Mucosa of descending colon (tissue), 3 donors: ENCODE measurements at regions of chr10 and their contacts with region 1.

Region 1: GRCh38 chr10:116683821-116684220 is 58.5 kb downstream of the HSPA12A start:
- DNase-seq: no peak
- ATAC-seq: no peak
- H3K4me3 ChIP-seq: no peak overlapping the region
- H3K4me1 ChIP-seq: no peaks in the 10 kb centered on the region
- CTCF ChIP-seq: no peak

Region 2: DNA sequence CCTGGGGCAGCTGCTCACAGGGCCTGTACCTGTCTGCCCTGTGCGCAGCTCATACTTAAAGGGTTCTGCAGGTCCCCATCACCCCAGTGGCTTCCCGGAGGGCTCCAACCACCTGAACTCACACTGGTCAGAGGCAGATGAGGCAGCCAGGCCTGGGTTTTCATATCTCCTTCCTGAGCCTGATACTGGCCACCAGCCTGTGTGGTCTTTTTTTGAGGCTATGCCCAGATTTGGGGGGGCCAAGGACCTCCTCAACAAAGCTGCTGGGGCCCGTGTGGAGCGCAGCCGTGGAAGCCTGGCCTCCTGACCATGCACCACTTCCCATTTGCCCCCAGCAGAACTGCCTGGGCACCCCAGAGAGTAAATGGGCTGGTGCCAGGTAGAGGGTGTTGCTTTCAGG is 37.3 kb before region 1 on chr10:
- intact Hi-C with region 1: no loop called
- DNase-seq: no peak
- ATAC-seq: no peak
- H3K4me3 ChIP-seq: no peak overlapping the region
- H3K4me1 ChIP-seq: no peaks in the 10 kb centered on the region
- CTCF ChIP-seq: no peak

Region 3: GRCh38 chr10:116787893-116788665 is 104.3 kb after region 1 on chr10:
- intact Hi-C with region 1: loop called (anchors 5 kb)
- DNase-seq: peak; percentile 66 to 86 (median 81)
- ATAC-seq: peak; percentile 90
- H3K4me3 ChIP-seq: no peak overlapping the region
- H3K4me1 ChIP-seq: peaks cover 6% of the 10 kb centered on the region
- CTCF ChIP-seq: peak; percentile 99

Region 4: GRCh38 chr10:116866987-116867595 is 183.3 kb after region 1 on chr10:
- intact Hi-C with region 1: no loop called
- DNase-seq: no peak
- ATAC-seq: no peak
- H3K4me3 ChIP-seq: no peak overlapping the region
- H3K4me1 ChIP-seq: no peaks in the 10 kb centered on the region
- CTCF ChIP-seq: no peak